ENCODE measurements at regions of chr12 and their contacts with region 1.

Region 1: DNA sequence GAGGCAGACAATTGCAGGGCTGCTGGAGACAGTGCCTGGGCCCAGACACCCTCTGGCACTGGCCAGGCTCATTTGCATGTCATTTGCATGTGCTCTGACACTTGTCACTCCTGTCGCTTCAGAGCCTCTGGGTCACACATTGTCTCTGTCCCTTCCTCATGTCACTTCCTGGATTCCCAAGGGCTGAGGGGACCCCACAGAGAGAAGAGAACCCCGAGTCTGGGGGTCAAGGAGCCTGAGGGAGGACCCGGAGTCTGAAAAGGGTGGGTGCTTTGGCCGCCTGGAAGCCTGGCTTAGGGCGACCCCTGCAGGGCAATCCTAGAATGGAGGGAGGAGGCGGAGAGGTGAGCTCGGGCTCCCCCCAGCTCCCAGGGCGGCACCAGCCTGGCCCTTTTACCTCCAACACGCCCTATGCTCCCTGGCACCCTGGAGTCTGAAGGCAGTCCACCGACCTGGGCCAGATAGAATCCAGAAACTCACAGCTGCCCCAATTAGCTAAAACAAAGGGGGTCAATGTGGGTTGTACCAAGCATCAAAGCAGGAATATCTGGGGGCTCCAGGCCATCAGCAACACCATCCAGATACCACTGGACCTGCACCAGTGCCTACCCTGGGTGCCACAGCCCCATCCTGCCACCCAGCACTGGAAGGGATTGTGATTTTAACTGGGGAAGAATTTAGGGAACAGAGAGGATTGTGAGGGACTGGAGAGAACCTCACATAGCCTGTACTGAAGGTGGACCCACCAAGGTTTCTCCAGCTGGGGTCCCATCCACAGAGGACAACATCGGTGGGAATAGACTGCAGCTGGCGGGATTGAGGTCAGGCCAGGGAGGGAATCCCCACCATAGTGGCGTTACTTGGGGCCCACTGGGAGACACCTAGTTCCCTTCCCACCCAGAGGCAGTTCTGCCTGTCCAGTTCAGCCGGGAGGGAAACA is 21.8 kb upstream of the KRT78 start:
- DNase-seq: peak; percentile 59
- ATAC-seq: peak; percentile 64
- H3K4me3 Mint-ChIP-seq: peak overlapping the region; percentile 24
- H3K27ac Mint-ChIP-seq: no peak overlapping the region
- H3K4me1 Mint-ChIP-seq: peaks cover 29% of the 10 kb centered on the region
- H3K27me3 Mint-ChIP-seq: peaks cover 5% of the 10 kb centered on the region
- CTCF ChIP-seq: no peak

Region 2: DNA sequence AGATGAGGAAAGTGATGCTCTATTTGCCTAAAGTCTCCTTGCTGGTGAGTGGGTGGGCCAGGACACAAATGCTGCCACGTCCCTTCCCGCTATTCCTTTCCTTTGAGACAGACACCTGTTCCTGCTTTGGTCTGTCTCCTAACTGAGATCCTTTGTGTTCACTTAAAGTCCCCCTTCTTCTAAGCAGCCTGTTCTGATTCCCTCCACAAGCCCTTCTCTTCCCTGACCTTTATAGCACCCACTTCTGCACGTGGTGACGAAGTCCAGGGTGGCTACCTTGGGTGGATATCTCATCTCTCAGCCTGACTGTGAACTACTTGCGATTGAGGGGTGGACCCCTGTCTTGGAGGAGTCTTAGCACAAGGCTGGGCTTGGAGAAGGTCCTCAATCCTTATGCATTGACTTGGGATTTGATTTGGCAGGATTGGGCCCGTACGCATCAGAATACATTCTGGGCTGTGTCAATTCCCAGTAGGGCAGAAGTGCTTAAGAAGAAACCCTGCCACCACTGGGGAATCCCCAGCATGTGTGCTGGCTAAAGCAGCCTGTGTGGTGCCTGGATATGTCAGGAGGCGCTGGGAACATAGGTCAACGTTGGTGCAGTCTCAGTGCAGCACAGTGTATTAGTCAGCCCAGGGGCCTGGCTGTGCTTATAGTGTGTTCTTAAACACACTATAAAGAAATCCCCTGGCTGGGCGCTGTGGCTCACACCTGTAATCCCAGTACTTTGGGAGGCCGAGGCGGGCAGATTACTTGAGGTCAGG is 702.5 kb before region 1 on chr12:
- CTCF ChIA-PET with region 1: no interaction called
- POLR2A ChIA-PET with region 1: no interaction called
- intact Hi-C with region 1: loop called (anchors 5 kb)
- DNase-seq: no peak
- ATAC-seq: no peak
- H3K4me3 Mint-ChIP-seq: no peak overlapping the region
- H3K27ac Mint-ChIP-seq: no peak overlapping the region
- H3K4me1 Mint-ChIP-seq: no peaks in the 10 kb centered on the region
- H3K27me3 Mint-ChIP-seq: peaks cover 10% of the 10 kb centered on the region
- CTCF ChIP-seq: no peak

Region 3: GRCh38 chr12:52372216-52373154 is 498.1 kb before region 1 on chr12:
- CTCF ChIA-PET with region 1: interaction called, 3 read pairs
- POLR2A ChIA-PET with region 1: no interaction called
- intact Hi-C with region 1: loop called (anchors 1 kb)
- DNase-seq: no peak
- ATAC-seq: peak; percentile 25
- H3K4me3 Mint-ChIP-seq: no peak overlapping the region
- H3K27ac Mint-ChIP-seq: no peak overlapping the region
- H3K4me1 Mint-ChIP-seq: no peaks in the 10 kb centered on the region
- H3K27me3 Mint-ChIP-seq: peaks cover 23% of the 10 kb centered on the region
- CTCF ChIP-seq: no peak

Region 4: DNA sequence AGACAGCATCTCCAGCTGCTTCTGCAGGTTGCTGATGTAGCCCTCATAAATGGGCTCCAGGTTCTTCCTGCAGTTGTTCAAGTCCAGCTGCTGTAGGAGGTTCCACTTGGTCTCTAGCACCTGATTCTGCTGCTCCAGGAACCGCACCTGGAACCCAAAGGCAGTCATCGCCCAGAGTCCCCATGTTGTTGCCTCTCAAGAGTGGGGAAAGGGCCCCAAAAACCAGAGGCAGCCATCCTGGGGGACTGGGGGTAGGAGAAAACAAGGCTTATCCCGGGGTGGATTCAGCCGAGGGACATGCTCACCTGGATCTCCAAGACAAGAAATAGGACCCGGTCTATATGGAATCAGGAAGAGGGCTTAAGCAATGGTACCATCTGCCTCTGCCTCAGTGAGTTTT is 271.7 kb before region 1 on chr12:
- CTCF ChIA-PET with region 1: no interaction called
- POLR2A ChIA-PET with region 1: no interaction called
- intact Hi-C with region 1: loop called (anchors 5 kb)
- DNase-seq: no peak
- ATAC-seq: no peak
- H3K4me3 Mint-ChIP-seq: no peak overlapping the region
- H3K27ac Mint-ChIP-seq: no peak overlapping the region
- H3K4me1 Mint-ChIP-seq: no peaks in the 10 kb centered on the region
- H3K27me3 Mint-ChIP-seq: peaks cover 20% of the 10 kb centered on the region
- CTCF ChIP-seq: no peak

Region 5: GRCh38 chr12:52884526-52885293 is 14.1 kb after region 1 on chr12:
- CTCF ChIA-PET with region 1: interaction called, 15 read pairs
- POLR2A ChIA-PET with region 1: no interaction called
- intact Hi-C with region 1: no loop called
- DNase-seq: peak; percentile 66
- ATAC-seq: peak; percentile 83
- H3K4me3 Mint-ChIP-seq: no peak overlapping the region
- H3K27ac Mint-ChIP-seq: no peak overlapping the region
- H3K4me1 Mint-ChIP-seq: peaks cover 5% of the 10 kb centered on the region
- H3K27me3 Mint-ChIP-seq: peaks cover 31% of the 10 kb centered on the region
- CTCF ChIP-seq: peak; percentile 69

Measured in activated B cell treated with CpG ODN at 0.5 μM for 24 hours (primary cell).